CD4-positive, alpha-beta memory T cell (primary cell): ENCODE measurements at regions of chr2 and their contacts with region 1.

Region 1: DNA sequence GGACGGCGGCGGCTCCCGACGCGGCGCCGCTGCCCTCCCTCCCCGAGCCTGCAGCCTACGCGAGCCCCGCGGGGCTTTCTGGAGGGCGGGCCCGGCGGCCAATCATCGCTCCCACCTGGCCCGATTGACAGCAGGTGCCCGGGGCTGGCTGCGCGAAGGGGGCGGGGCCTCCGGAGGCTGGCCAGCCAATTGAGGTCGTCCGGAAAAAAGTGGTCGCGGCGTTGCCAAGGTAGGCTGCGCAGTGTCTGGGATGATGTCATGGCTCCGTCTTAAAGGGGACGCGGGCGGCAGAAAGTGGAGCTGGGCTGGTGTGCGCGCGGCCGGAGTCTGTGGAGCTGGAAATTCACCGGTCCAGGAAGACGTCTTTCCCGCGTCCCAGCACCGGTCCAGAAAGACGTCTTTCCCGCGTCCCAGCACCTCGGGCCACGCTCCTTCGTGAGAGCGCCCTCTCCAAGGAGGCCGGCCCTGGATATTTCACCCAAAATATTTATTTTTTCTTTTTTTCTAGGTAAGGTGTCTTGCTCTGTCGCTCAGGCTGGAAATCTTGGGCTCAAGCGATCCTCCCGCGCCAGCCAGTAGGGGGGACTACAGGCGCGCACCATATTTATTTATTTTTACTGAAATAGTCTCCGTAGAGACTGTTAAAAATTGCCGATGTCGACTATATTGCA is at the start of gene ACTR1B:
- DNase-seq: peak; percentile 97 to 99 (median 98)
- H3K4me3 ChIP-seq: peak within 1 kb of the TSS; percentile 52 to 99
- H3K4me3 Mint-ChIP-seq: peak within 1 kb of the TSS; percentile 92 to 97 (median 96)
- H3K27ac ChIP-seq: peak within 1 kb of the TSS; percentile 92
- H3K27ac Mint-ChIP-seq: peak within 1 kb of the TSS; percentile 98 to 100 (median 99)
- H3K4me1 ChIP-seq: peaks cover 36% of the 10 kb centered on the region
- H3K4me1 Mint-ChIP-seq: peaks cover 15 to 41% (median 23%) of the 10 kb centered on the region in 4 donors
- H3K27me3 ChIP-seq: no peaks in the 10 kb centered on the region
- H3K27me3 Mint-ChIP-seq: no peaks in the 10 kb centered on the region
- total RNA-seq, gene ACTR1B: 96.1 to 97.6 TPM

Region 2: DNA sequence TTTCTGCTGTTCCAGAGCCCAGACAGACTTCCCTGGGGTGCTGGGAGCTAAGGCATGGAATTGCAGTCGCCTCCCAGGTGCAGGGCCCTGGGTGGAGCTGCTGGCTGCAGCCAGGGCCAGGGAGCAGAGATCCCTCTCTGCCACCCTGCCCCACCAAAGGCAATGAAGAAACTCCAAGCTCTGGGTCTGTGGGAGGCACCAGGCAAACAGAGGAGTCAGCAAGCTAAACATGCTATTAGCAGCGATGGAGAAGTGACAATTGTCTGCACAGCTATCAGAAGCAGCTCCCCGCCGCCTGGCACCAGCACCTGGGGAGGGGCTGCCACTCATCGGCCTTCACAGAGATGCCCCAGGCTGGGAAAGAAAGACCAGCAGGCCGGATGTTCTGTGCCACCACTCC is 46.2 kb before region 1 on chr2:
- CTCF ChIA-PET with region 1: no interaction called
- POLR2A ChIA-PET with region 1: no interaction called
- intact Hi-C with region 1: no loop called
- DNase-seq: no peak
- H3K4me3 ChIP-seq: no peak overlapping the region
- H3K4me3 Mint-ChIP-seq: no peak overlapping the region
- H3K27ac ChIP-seq: no peak overlapping the region
- H3K27ac Mint-ChIP-seq: no peak overlapping the region
- H3K4me1 ChIP-seq: no peaks in the 10 kb centered on the region
- H3K4me1 Mint-ChIP-seq: peaks cover 0 to 3% (median under 1%) of the 10 kb centered on the region in 4 donors
- H3K27me3 ChIP-seq: no peaks in the 10 kb centered on the region
- H3K27me3 Mint-ChIP-seq: no peaks in the 10 kb centered on the region

Region 3: GRCh38 chr2:97645695-97646629 is 18.1 kb before region 1 on chr2 and contains the start of gene COX5B:
- CTCF ChIA-PET with region 1: interaction called, 27 read pairs
- POLR2A ChIA-PET with region 1: interaction called, 323 read pairs
- intact Hi-C with region 1: loop called (anchors 1 kb)
- DNase-seq: peak; percentile 97 to 99 (median 98)
- H3K4me3 ChIP-seq: peak within 1 kb of the TSS; percentile 84 to 87
- H3K4me3 Mint-ChIP-seq: peak within 1 kb of the TSS; percentile 91 to 98 (median 96)
- H3K27ac ChIP-seq: peak within 1 kb of the TSS; percentile 88
- H3K27ac Mint-ChIP-seq: peak within 1 kb of the TSS; percentile 92 to 99 (median 98)
- H3K4me1 ChIP-seq: peaks cover 20% of the 10 kb centered on the region
- H3K4me1 Mint-ChIP-seq: peaks cover 18 to 33% (median 27%) of the 10 kb centered on the region in 4 donors
- H3K27me3 ChIP-seq: no peaks in the 10 kb centered on the region
- H3K27me3 Mint-ChIP-seq: no peaks in the 10 kb centered on the region
- total RNA-seq, gene COX5B: 118 to 120 TPM

Region 4: GRCh38 chr2:97651114-97651513 is 13.0 kb before region 1 on chr2:
- CTCF ChIA-PET with region 1: interaction called, 27 read pairs
- POLR2A ChIA-PET with region 1: interaction called, 323 read pairs
- intact Hi-C with region 1: loop called (anchors 1 kb)
- DNase-seq: no peak
- H3K4me3 ChIP-seq: no peak overlapping the region
- H3K4me3 Mint-ChIP-seq: no peak overlapping the region
- H3K27ac ChIP-seq: no peak overlapping the region
- H3K27ac Mint-ChIP-seq: peak overlapping the region in 3 of 7 donors; percentile 37 to 79 (median 60)
- H3K4me1 ChIP-seq: peaks cover 13% of the 10 kb centered on the region
- H3K4me1 Mint-ChIP-seq: peaks cover 16 to 24% (median 23%) of the 10 kb centered on the region in 4 donors
- H3K27me3 ChIP-seq: no peaks in the 10 kb centered on the region
- H3K27me3 Mint-ChIP-seq: no peaks in the 10 kb centered on the region

Region 5: DNA sequence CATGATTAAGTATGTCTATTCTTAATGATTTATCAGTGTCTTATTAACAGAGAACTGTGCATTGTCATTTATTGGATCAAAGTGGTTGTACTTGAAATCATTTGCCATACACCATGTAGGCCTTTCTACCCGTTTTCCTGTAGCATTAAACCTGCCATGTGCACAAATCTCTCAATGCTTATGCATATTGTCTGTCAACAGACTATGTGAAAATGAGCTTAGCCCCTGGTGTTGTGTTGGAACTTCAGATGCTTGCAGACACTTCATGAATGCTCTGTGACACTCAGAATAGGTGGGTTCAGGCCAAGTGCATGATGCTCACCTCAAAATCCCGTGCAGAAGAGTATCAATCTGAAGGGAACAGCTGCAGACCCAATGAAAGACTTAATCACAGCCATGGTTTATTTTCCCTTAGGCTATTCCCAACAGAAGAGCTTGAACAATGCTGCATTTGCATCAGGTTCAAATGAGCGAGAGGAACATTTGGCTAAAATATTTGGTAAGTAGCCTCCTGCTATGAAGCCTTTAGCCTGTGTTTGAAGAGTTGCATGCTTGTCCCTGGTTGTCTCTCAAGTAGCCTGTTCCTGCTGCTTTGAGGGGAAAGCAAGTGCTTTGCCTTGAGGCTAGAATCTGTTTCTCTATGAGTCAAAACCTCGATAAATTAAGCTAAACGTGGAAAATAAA is 11.5 kb after region 1 on chr2:
- CTCF ChIA-PET with region 1: interaction called, 10 read pairs
- POLR2A ChIA-PET with region 1: interaction called, 3 read pairs
- intact Hi-C with region 1: no loop called
- DNase-seq: no peak
- H3K4me3 ChIP-seq: no peak overlapping the region
- H3K4me3 Mint-ChIP-seq: no peak overlapping the region
- H3K27ac ChIP-seq: no peak overlapping the region
- H3K27ac Mint-ChIP-seq: no peak overlapping the region
- H3K4me1 ChIP-seq: no peaks in the 10 kb centered on the region
- H3K4me1 Mint-ChIP-seq: peaks cover 0 to 3% (median 0%) of the 10 kb centered on the region in 4 donors
- H3K27me3 ChIP-seq: no peaks in the 10 kb centered on the region
- H3K27me3 Mint-ChIP-seq: peaks cover 0 to 9% of the 10 kb centered on the region in 2 donors

Region 6: DNA sequence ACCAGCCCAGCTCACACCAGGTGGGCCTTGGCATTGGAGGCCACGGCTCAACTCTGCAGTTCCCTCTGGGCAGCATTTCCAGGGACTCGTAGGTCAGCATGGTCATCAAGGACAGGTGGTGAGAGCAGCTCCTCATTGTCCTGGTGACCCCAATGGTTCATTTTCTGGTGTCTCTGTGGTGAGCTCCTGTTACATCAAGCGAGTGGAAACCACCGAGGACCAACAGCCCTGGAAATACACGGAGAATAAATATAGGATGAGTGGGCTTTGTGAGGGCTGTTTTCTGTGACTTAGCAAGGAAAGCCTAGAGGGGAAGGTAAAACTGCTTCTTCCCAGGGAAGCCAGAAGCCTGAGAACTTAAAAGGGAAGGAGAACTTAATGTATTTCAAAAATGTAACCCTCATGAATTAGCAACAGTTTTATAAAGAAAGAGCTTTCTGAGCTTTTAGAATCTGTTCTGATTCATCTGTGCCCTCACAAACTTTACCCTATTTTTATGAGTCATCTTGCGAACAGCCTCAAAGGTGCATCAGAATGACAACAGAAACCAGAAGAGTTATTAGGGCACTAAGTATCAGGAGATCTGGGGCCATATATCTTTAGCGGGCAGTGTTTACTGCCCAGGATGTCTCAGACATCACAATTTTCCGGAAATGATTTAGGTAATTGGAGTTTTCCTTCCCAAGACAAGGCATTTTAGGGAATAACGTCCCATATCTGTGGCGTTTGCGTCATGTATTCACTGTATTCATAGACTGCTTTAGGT is 24.1 kb after region 1 on chr2:
- CTCF ChIA-PET with region 1: no interaction called
- POLR2A ChIA-PET with region 1: no interaction called
- intact Hi-C with region 1: no loop called
- DNase-seq: no peak
- H3K4me3 ChIP-seq: no peak overlapping the region
- H3K4me3 Mint-ChIP-seq: no peak overlapping the region
- H3K27ac ChIP-seq: no peak overlapping the region
- H3K27ac Mint-ChIP-seq: peak overlapping the region in 2 of 7 donors; percentile 34 to 76
- H3K4me1 ChIP-seq: no peaks in the 10 kb centered on the region
- H3K4me1 Mint-ChIP-seq: peaks cover 4 to 9% (median 6%) of the 10 kb centered on the region in 4 donors
- H3K27me3 ChIP-seq: no peaks in the 10 kb centered on the region
- H3K27me3 Mint-ChIP-seq: no peaks in the 10 kb centered on the region

Region 7: DNA sequence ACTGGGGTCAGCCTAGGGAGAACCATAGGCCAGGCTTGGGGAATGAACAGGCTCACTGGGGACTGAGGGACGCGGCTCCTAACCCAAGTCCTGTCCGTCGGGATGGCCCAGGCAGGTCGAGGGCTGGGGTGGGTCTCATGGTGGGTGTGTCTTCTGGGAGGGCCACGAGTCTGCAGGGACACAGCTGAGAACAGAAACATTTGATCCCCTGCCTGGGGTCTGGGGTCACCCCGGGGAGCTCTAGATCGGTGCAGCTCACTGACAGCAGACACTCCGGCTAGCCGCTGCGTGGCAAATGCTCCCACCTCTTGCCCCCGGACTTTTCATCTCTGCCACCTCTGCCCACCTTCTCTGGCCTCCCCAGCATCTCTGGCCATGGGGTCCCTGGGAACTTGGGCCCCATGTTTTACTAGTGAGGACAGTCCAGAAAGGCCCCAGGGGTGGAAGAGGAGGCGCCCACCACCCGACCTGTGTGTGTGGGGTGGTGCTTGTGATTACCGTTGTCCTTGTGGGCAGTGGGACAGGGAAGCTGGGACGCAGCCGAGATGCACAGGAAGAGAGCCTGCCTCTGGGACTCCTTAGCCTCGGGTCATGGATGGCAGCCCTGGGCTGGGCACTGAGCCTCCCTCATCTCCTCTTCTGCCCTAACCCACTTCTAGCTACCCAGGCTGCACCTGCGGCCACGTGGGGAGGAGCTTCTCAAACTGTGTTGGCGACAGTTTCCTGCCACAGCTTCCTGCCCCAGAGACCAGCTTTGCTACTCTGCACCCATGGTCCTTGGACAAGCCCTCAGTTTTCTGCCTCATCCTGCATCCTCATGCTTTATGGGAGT is 54.2 kb after region 1 on chr2:
- CTCF ChIA-PET with region 1: interaction called, 6 read pairs
- POLR2A ChIA-PET with region 1: interaction called, 29 read pairs
- intact Hi-C with region 1: loop called (anchors 5 kb)
- DNase-seq: peak; percentile 73 to 86 (median 80)
- H3K4me3 ChIP-seq: peak overlapping the region; percentile 49 to 94
- H3K4me3 Mint-ChIP-seq: peak overlapping the region; percentile 93 to 98 (median 96)
- H3K27ac ChIP-seq: peak overlapping the region; percentile 91
- H3K27ac Mint-ChIP-seq: peak overlapping the region; percentile 92 to 99 (median 95)
- H3K4me1 ChIP-seq: peaks cover 92% of the 10 kb centered on the region
- H3K4me1 Mint-ChIP-seq: peaks cover 61 to 95% (median 73%) of the 10 kb centered on the region in 4 donors
- H3K27me3 ChIP-seq: no peaks in the 10 kb centered on the region
- H3K27me3 Mint-ChIP-seq: no peaks in the 10 kb centered on the region

Region 8: GRCh38 chr2:97730245-97730644 is 66.1 kb after region 1 on chr2:
- CTCF ChIA-PET with region 1: no interaction called
- POLR2A ChIA-PET with region 1: no interaction called
- intact Hi-C with region 1: no loop called
- DNase-seq: no peak
- H3K4me3 ChIP-seq: no peak overlapping the region
- H3K4me3 Mint-ChIP-seq: peak overlapping the region in 1 of 8 donors; percentile 36
- H3K27ac ChIP-seq: no peak overlapping the region
- H3K27ac Mint-ChIP-seq: peak overlapping the region in 5 of 7 donors; percentile 16 to 68 (median 36)
- H3K4me1 ChIP-seq: peaks cover 43% of the 10 kb centered on the region
- H3K4me1 Mint-ChIP-seq: peaks cover 39 to 67% (median 49%) of the 10 kb centered on the region in 4 donors
- H3K27me3 ChIP-seq: no peaks in the 10 kb centered on the region
- H3K27me3 Mint-ChIP-seq: no peaks in the 10 kb centered on the region

Region 9: DNA sequence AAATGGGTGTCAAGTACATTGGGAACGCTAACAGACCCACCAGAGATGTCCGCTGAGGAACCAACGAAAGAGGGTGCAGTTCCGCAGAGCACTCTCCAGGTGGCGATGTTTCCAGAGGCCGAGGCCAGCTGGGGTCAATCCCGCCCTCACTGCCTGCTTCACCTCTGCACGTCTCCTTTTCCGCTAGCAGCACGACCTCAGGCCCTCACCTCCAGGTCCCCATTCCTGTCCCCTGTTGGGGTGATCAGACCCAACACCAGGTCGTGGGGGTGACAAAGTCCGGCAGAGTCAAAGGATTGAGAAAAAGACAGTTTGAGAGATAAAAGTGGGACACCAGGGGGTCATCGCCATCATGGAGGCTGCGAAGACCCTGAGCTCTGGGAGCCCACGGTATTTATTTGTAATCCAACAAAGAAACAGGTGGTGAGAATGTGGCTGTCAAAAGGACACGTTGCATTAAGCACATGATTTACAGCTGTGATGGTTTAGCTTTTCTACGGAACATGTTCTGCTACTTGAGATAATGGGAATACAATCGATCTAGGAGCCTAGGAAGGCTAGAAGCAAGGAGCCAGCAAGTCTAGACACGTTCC is 76.6 kb after region 1 on chr2:
- CTCF ChIA-PET with region 1: no interaction called
- POLR2A ChIA-PET with region 1: interaction called, 13 read pairs
- intact Hi-C with region 1: no loop called
- DNase-seq: peak in 4 of 5 donors; percentile 31 to 43 (median 34)
- H3K4me3 ChIP-seq: no peak overlapping the region
- H3K4me3 Mint-ChIP-seq: peak overlapping the region in 3 of 8 donors; percentile 20 to 61 (median 50)
- H3K27ac ChIP-seq: no peak overlapping the region
- H3K27ac Mint-ChIP-seq: peak overlapping the region; percentile 25 to 90 (median 79)
- H3K4me1 ChIP-seq: peaks cover 55% of the 10 kb centered on the region
- H3K4me1 Mint-ChIP-seq: peaks cover 42 to 77% (median 57%) of the 10 kb centered on the region in 4 donors
- H3K27me3 ChIP-seq: no peaks in the 10 kb centered on the region
- H3K27me3 Mint-ChIP-seq: no peaks in the 10 kb centered on the region

Region 10: GRCh38 chr2:97995734-97996624 is 331.9 kb after region 1 on chr2 and contains the start of gene TMEM131:
- CTCF ChIA-PET with region 1: no interaction called
- POLR2A ChIA-PET with region 1: no interaction called
- intact Hi-C with region 1: loop called (anchors 5 kb)
- DNase-seq: peak; percentile 93 to 97 (median 95)
- H3K4me3 ChIP-seq: peak within 1 kb of the TSS; percentile 69 to 95
- H3K4me3 Mint-ChIP-seq: peak within 1 kb of the TSS; percentile 90 to 100 (median 97)
- H3K27ac ChIP-seq: peak within 1 kb of the TSS; percentile 89
- H3K27ac Mint-ChIP-seq: peak within 1 kb of the TSS; percentile 84 to 98 (median 94)
- H3K4me1 ChIP-seq: peaks cover 37% of the 10 kb centered on the region
- H3K4me1 Mint-ChIP-seq: peaks cover 28 to 47% (median 36%) of the 10 kb centered on the region in 4 donors
- H3K27me3 ChIP-seq: no peaks in the 10 kb centered on the region
- H3K27me3 Mint-ChIP-seq: peaks cover 0 to 2% of the 10 kb centered on the region in 2 donors
- total RNA-seq, gene TMEM131: 47.5 to 47.6 TPM